ENCODE measurements at regions of chr9 and their contacts with region 1.

Region 1: GRCh38 chr9:98860871-98861293 is 53.4 kb downstream of the GALNT12 start:
- DNase-seq: peak in 4 of 5 donors; percentile 82 to 90 (median 84)
- ATAC-seq: peak; percentile 78 to 94 (median 90)
- H3K4me3 ChIP-seq: no peak overlapping the region
- H3K27ac ChIP-seq: peak overlapping the region in 10 of 12 donors; percentile 23 to 85 (median 50)
- H3K4me1 ChIP-seq: peaks cover 4 to 64% (median 36%) of the 10 kb centered on the region in 12 donors
- H3K27me3 ChIP-seq: no peaks in the 10 kb centered on the region
- CTCF ChIP-seq: peak; percentile 39 to 90 (median 71)
- POLR2A ChIP-seq: no peak

Region 2: GRCh38 chr9:98667005-98667640 is 193.8 kb before region 1 on chr9:
- intact Hi-C with region 1: no loop called
- DNase-seq: no peak
- ATAC-seq: no peak
- H3K4me3 ChIP-seq: no peak overlapping the region
- H3K27ac ChIP-seq: no peak overlapping the region
- H3K4me1 ChIP-seq: no peaks in the 10 kb centered on the region
- H3K27me3 ChIP-seq: peaks cover 0 to 2% (median 0%) of the 10 kb centered on the region in 9 donors
- CTCF ChIP-seq: no peak
- POLR2A ChIP-seq: no peak

Region 3: GRCh38 chr9:99134893-99135341 is 274.0 kb after region 1 on chr9:
- intact Hi-C with region 1: loop called in 7 of 10 experiments (anchors 1 to 5 kb)
- DNase-seq: no peak
- ATAC-seq: no peak
- H3K4me3 ChIP-seq: no peak overlapping the region
- H3K27ac ChIP-seq: no peak overlapping the region
- H3K4me1 ChIP-seq: peaks cover 0 to 65% (median under 1%) of the 10 kb centered on the region in 12 donors
- H3K27me3 ChIP-seq: no peaks in the 10 kb centered on the region
- CTCF ChIP-seq: no peak
- POLR2A ChIP-seq: no peak

Region 4: GRCh38 chr9:99140685-99141314 is 279.9 kb after region 1 on chr9:
- intact Hi-C with region 1: loop called in 8 of 10 experiments (anchors 1 to 5 kb)
- DNase-seq: peak in 4 of 5 donors; percentile 31 to 49 (median 36)
- ATAC-seq: peak in 3 of 4 donors; percentile 85 to 90 (median 89)
- H3K4me3 ChIP-seq: no peak overlapping the region
- H3K27ac ChIP-seq: peak overlapping the region in 3 of 12 donors; percentile 10 to 48 (median 23)
- H3K4me1 ChIP-seq: peaks cover 0 to 47% (median 6%) of the 10 kb centered on the region in 12 donors
- H3K27me3 ChIP-seq: no peaks in the 10 kb centered on the region
- CTCF ChIP-seq: peak; percentile 75 to 95 (median 88)
- POLR2A ChIP-seq: no peak

Region 5: GRCh38 chr9:99146574-99146973 is 285.7 kb after region 1 on chr9:
- intact Hi-C with region 1: loop called in 6 of 10 experiments (anchors 2 to 5 kb)
- DNase-seq: no peak
- ATAC-seq: peak in 3 of 4 donors; percentile 58 to 75 (median 62)
- H3K4me3 ChIP-seq: no peak overlapping the region
- H3K27ac ChIP-seq: no peak overlapping the region
- H3K4me1 ChIP-seq: peaks cover 0 to 11% (median 0%) of the 10 kb centered on the region in 12 donors
- H3K27me3 ChIP-seq: no peaks in the 10 kb centered on the region
- CTCF ChIP-seq: no peak
- POLR2A ChIP-seq: no peak

Region 6: GRCh38 chr9:99319048-99319447 is 458.2 kb after region 1 on chr9:
- intact Hi-C with region 1: no loop called
- DNase-seq: no peak
- ATAC-seq: no peak
- H3K4me3 ChIP-seq: no peak overlapping the region
- H3K27ac ChIP-seq: no peak overlapping the region
- H3K4me1 ChIP-seq: no peaks in the 10 kb centered on the region
- H3K27me3 ChIP-seq: peaks cover 0 to 5% (median 0%) of the 10 kb centered on the region in 9 donors
- CTCF ChIP-seq: no peak
- POLR2A ChIP-seq: no peak

Measured in heart left ventricle (tissue), 16 donors.